Mammary epithelial cell (primary cell): ENCODE measurements at regions of chr17 and their contacts with region 1.

Region 1: DNA sequence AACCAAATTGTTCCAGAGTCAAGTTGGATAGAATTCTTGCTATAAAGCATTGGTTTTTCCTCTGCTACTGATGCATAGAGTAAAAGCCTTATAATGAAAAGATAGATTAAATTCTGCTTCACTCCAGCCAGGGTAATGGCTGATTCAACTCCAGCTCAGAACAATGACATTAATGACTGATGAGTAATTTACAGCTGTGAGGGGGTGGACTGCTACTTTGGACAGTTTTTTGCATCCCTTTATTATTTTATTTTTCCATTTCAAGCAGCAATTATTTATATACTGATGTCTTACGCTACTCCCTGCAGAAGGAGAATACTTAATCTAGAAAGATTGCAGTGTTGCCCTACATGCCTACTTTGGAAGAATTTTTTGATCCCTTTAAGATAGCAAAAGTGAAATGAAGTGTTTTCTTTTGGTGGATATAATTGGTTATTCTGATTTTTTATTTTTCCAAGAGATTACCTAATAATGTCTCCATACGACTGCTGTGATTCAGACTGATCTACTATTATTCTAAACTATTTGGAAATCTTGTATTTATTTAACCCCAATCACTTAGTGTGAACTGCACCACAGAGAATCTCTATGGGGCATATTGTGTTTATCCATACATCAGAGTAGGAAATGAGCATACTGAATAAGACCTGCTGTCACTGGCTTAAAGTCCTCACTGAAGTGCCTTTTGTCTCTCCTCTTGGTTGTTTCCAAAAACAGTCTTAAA is 149.5 kb downstream of the TRIM37 start:
- DNase-seq: peak; percentile 61
- H3K4me3 ChIP-seq: no peak overlapping the region
- H3K27ac ChIP-seq: no peak overlapping the region
- H3K4me1 ChIP-seq: peaks cover 16% of the 10 kb centered on the region
- H3K27me3 ChIP-seq: no peaks in the 10 kb centered on the region
- CTCF ChIP-seq: no peak

Region 2: GRCh38 chr17:58531661-58532554 is 425.3 kb before region 1 on chr17:
- CTCF ChIA-PET with region 1: no interaction called
- dilution Hi-C with region 1: no loop called
- in situ Hi-C with region 1: no loop called
- intact Hi-C with region 1: loop called (anchors 5 kb)
- DNase-seq: peak; percentile 29
- H3K4me3 ChIP-seq: peak overlapping the region; percentile 17 to 43 (median 32)
- H3K27ac ChIP-seq: no peak overlapping the region
- H3K4me1 ChIP-seq: peaks cover 31% of the 10 kb centered on the region
- H3K27me3 ChIP-seq: no peaks in the 10 kb centered on the region
- CTCF ChIP-seq: no peak